Tibial artery (tissue), 4 donors: ENCODE measurements at regions of chr14 and their contacts with region 1.

Region 1: DNA sequence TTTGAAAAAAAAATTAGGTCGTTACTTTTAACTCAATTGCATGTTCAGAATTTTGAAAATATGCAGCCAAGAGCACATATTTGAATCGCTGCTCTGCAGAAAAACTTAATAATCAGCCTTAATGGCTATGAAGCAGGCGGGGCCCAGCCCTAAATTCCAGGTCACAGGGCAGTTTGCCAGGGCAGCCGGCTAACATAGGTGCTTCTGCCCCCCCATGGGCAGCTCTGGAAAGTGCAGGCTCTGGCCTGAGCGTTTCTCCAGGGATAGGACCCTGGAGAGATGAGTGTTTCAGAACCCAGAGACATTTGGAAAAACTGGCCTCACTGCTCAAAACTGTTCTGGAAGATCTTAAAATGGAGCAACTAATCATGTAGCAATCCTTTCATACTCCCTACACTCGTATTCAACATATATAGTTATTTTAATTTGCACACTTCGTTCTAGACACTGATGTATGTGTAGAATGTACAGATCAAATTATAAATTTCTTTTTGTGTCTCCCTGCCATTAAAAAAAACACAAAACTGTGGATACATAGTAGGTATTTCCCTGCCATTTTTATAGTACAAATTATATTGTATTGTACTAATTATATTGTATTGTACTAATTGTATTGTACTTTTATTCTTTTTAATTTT is 26.0 kb upstream of the PTGR2 start:
- DNase-seq: peak; percentile 92 to 95
- H3K4me3 ChIP-seq: no peak overlapping the region
- H3K27ac ChIP-seq: peak overlapping the region in 1 of 2 donors; percentile 24
- H3K4me1 ChIP-seq: peaks cover 0 to 11% (median 0%) of the 10 kb centered on the region in 4 donors
- H3K27me3 ChIP-seq: no peaks in the 10 kb centered on the region
- CTCF ChIP-seq: peak; percentile 93 to 94

Region 2: GRCh38 chr14:73728717-73729330 is 96.8 kb before region 1 on chr14:
- intact Hi-C with region 1: loop called (anchors 1 kb)
- DNase-seq: peak; percentile 78 to 89
- H3K4me3 ChIP-seq: no peak overlapping the region
- H3K27ac ChIP-seq: peak overlapping the region; percentile 20 to 84
- H3K4me1 ChIP-seq: peaks cover 0 to 50% (median 36%) of the 10 kb centered on the region in 4 donors
- H3K27me3 ChIP-seq: no peaks in the 10 kb centered on the region
- CTCF ChIP-seq: peak; percentile 96

Region 3: DNA sequence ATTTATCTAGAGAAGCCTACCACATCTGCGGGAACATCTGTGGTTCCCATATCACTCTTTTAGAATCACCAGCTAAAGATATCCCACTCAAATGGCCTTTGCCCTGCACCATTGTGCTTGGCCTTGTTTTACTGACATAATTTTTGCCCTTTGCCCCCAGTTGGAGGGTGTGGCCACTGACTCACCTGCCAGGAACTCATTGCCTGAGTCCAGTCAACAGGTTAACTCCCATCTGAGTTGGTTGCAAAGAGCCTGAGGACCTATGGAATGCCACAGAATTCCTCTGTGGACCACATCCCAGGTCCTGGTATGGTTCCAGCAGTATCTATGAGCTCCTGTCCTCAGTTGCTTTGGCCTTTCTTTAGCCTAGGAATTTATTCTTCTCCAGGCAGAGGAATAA is 29.7 kb before region 1 on chr14:
- intact Hi-C with region 1: no loop called
- DNase-seq: no peak
- H3K4me3 ChIP-seq: no peak overlapping the region
- H3K27ac ChIP-seq: no peak overlapping the region
- H3K4me1 ChIP-seq: peaks cover 0 to 15% (median 10%) of the 10 kb centered on the region in 4 donors
- H3K27me3 ChIP-seq: no peaks in the 10 kb centered on the region
- CTCF ChIP-seq: no peak